A673 (cell line): ENCODE measurements at regions of chr4 and their contacts with region 1.

Region 1: DNA sequence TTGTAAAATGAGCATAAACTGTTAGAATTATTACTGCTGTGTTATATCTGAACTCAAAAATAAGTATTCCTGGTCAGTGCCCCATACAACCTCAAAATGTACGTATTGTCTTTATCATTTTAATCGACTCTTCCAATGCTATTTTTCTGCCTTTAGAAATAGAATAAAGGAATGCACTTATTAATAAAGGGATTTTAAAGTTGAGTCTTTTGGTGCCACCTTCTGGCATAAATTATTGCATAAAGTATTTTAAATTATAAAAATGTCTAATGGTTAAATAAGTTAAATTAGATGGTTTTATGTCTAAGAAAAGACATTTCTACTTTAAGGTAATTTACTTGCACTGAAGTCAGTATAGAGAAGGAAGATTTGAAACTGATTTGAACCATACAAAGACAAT is 424.0 kb upstream of the NDST4 start:
- DNase-seq: peak; percentile 48
- H3K4me3 ChIP-seq: no peak overlapping the region
- H3K27ac ChIP-seq: no peak overlapping the region
- H3K4me1 ChIP-seq: peaks cover 14% of the 10 kb centered on the region
- H3K27me3 ChIP-seq: no peaks in the 10 kb centered on the region
- CTCF ChIP-seq: peak; percentile 56; the same call in 1 of the 2 replicates

Region 2: DNA sequence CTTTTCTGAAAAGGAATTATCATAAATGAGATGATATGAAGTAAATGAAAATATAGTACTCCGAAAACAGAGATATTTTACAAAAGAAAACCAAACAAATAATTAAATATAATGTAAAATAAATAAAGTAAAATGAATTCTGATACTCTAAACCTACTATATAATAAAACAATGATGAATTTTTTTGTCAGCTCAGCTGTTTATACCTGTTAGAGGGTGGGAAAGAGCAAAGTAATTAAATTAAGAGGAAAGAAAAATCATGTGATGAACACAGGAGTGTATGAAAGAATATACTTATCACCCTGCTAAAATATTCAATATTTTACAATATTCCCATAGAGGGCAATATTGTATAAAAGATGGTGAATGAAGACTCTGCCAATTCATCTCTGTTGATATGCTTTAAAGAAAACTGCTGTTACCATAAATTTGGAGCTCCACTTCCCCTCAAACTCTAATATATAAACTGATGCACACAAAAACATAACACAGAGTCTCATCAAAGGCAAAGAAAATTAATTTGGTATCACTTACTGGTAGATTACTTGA is 417.5 kb before region 1 on chr4:
- CTCF ChIA-PET with region 1: no interaction called
- POLR2A ChIA-PET with region 1: no interaction called
- intact Hi-C with region 1: loop called (anchors 10 kb)
- DNase-seq: peak; percentile 67
- H3K4me3 ChIP-seq: no peak overlapping the region
- H3K27ac ChIP-seq: peak overlapping the region; percentile 25
- H3K4me1 ChIP-seq: peaks cover 45% of the 10 kb centered on the region
- H3K27me3 ChIP-seq: no peaks in the 10 kb centered on the region
- CTCF ChIP-seq: peak; percentile 52

Region 3: DNA sequence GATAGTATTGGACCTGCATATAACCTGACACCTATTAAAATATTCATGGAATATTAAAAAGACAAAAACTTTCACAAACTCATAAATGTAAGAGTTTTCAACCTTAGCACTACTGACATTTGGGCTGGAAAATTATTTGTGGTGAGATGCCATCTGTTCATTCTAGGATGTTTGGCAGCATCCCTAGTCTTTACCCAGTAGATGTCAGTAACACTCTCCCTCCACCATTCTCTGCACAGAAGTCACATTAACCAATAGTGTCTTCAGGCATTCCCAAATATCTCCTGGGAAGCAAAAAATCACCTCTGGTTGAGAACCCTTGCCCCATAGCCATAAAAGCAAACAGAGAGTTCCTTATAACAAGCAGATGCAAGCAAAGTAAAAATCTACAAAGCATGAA is 382.6 kb before region 1 on chr4:
- CTCF ChIA-PET with region 1: no interaction called
- POLR2A ChIA-PET with region 1: no interaction called
- intact Hi-C with region 1: loop called (anchors 10 kb)
- DNase-seq: peak; percentile 63
- H3K4me3 ChIP-seq: no peak overlapping the region
- H3K27ac ChIP-seq: no peak overlapping the region
- H3K4me1 ChIP-seq: no peaks in the 10 kb centered on the region
- H3K27me3 ChIP-seq: no peaks in the 10 kb centered on the region
- CTCF ChIP-seq: peak; percentile 57

Region 4: DNA sequence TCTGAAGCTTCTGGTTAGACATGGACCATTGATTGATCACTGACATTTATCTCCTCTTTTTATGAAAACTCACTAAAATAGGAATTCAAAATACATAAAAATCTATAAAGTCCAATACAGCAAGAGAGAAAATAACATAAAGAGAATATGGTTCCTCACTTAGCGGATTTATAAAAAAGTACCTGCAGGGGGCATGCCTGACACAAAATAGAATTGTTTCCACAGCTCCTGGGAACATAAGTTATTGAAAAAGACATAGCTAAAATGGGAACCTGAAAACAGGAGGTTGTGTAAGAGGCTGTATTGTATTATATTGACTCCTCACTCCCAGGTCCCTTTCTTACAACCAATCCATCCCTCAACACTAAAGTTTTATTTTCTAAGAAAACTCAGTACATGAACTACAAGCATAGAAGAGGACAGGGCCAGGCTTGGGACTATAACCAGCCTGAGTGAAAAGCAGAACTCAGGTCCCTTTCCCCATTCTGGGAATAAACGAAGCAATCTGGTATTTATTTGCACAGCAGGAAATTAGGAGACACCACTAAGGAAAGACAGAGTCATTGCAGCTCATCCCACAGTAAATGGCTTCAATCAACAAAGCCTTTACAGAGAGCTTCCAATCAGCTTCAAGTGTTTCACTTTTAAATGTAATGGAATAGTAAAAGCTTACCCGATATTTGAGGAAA is 302.8 kb before region 1 on chr4:
- CTCF ChIA-PET with region 1: no interaction called
- POLR2A ChIA-PET with region 1: no interaction called
- intact Hi-C with region 1: loop called (anchors 5 kb)
- DNase-seq: peak; percentile 86
- H3K4me3 ChIP-seq: no peak overlapping the region
- H3K27ac ChIP-seq: peak overlapping the region; percentile 41
- H3K4me1 ChIP-seq: peaks cover 33% of the 10 kb centered on the region
- H3K27me3 ChIP-seq: no peaks in the 10 kb centered on the region
- CTCF ChIP-seq: peak; percentile 68

Region 5: DNA sequence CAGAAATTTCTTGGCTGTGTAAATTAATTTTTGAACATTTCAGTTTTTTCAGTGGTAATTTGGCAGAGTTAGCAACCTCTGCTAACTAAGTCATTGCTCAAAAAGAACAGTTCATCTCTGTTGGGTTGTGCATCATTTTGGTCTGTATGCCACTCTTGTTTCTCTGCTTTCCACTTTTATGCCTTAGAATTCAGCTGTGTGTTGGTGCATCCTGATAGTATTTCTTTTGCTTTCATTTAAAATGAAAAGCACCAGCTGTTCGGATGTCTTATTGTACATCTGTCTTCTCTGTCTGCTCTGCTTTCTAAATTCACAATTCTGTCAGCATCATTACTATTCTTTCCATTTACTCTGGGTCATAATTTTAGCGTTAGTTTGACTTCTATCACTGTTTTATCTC is 35.7 kb before region 1 on chr4:
- CTCF ChIA-PET with region 1: no interaction called
- POLR2A ChIA-PET with region 1: no interaction called
- intact Hi-C with region 1: no loop called
- DNase-seq: no peak
- H3K4me3 ChIP-seq: no peak overlapping the region
- H3K27ac ChIP-seq: no peak overlapping the region
- H3K4me1 ChIP-seq: no peaks in the 10 kb centered on the region
- H3K27me3 ChIP-seq: no peaks in the 10 kb centered on the region
- CTCF ChIP-seq: no peak